ENCODE measurements at regions of chr13 and their contacts with region 1.

Region 1: DNA sequence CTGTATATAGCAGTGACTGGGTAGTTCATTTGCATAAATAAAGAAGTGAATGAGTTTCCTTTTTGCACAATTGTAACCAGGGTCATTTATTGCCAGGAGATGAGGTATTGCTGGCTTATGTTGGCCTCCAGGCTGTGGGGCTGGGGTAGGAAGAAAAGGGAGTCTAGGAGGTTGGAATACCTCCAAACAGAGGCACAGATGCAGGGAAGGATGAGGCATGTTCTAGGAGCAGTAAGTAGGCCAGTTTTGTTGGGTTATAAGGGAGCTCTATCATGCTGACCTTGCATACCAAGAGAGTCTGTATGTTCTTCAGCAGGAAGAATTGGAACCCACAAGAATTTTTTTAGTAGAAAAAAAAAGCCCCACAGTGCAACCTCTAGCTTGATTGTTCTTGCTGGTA is 17.2 kb upstream of the CYSLTR2 start:
- DNase-seq: peak; percentile 64
- H3K4me3 ChIP-seq: no peak overlapping the region
- H3K27ac ChIP-seq: no peak overlapping the region
- H3K4me1 ChIP-seq: peaks cover 3% of the 10 kb centered on the region
- H3K27me3 ChIP-seq: no peaks in the 10 kb centered on the region
- CTCF ChIP-seq: no peak

Region 2: DNA sequence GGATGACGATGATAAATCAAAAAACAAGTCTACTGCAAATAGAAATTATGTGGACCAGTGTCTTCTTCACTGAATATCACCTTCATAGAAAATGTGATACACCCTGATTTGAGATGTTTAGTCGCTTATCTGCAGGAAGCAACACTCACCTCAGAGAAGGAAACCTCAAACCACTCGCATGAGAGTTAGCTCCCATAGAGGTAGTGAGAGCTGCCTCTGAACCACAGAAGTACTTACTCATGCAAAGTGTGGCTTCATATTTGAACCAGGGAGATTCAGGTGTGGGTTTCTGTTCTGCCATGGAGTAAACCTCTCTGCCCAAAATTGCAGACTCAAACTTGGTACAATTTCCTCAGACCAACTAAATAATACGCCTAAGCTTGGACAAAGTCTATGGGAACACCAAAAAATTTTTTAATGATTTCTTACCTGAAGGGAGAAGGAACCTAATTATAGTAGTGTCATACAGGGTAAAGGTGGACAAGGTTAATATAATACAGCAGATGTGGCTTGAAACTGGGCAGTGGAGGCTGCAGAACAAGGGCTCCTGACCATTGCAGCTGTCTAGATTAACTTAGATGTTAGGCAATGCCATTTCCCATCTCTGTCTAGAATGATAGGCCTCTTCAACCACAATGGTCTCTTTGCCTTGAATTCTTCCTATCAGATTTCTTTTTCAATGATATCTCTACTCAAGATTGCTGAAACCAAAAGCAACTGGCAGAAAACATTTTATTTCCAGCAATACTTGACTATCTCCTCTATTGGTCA is 74.1 kb before region 1 on chr13:
- CTCF ChIA-PET with region 1: no interaction called
- dilution Hi-C with region 1: no loop called
- in situ Hi-C with region 1: no loop called
- intact Hi-C with region 1: no loop called
- DNase-seq: peak; percentile 84
- H3K4me3 ChIP-seq: no peak overlapping the region
- H3K27ac ChIP-seq: no peak overlapping the region
- H3K4me1 ChIP-seq: peaks cover 13% of the 10 kb centered on the region
- H3K27me3 ChIP-seq: no peaks in the 10 kb centered on the region
- CTCF ChIP-seq: no peak

Region 3: DNA sequence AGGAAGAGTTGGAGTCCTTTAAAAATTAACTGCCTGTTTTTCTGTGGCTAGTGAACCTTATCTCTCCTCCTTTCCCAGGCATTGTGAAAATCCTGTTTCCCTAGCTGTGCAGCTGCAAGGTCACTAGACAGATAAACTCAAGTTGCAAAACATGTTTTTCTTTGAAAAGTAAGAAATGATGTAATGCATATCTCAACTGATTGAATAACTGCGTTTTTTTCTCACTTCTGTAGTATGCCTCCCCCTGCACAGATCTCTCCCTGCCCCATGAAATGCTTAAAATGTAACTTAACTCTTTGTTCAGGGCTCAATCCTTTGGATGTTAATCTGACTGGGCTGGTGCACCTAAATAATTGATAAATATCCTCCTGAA is 10.5 kb before region 1 on chr13:
- CTCF ChIA-PET with region 1: no interaction called
- dilution Hi-C with region 1: no loop called
- in situ Hi-C with region 1: no loop called
- intact Hi-C with region 1: no loop called
- DNase-seq: no peak
- H3K4me3 ChIP-seq: no peak overlapping the region
- H3K27ac ChIP-seq: no peak overlapping the region
- H3K4me1 ChIP-seq: no peaks in the 10 kb centered on the region
- H3K27me3 ChIP-seq: no peaks in the 10 kb centered on the region
- CTCF ChIP-seq: no peak

Region 4: DNA sequence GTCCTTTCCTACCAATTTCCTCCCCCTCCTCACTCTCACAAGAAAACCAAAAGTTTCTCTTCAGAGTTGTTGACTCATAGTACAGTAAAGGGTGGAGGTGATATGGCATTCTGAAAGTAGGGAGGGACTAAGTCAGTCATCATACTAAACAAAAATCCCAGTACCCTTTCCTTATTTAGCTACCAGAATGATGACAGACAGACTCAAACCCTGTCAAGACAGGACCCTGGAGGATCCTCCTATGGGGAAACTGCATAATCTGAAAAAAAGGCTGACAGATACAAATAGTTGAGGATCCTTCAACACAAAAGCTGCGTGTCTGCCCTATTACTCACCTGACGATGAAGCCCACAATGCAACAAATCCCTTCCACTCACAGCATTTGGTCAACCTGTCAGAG is 72.7 kb after region 1 on chr13:
- CTCF ChIA-PET with region 1: no interaction called
- dilution Hi-C with region 1: loop called (anchors 5 kb)
- in situ Hi-C with region 1: no loop called
- intact Hi-C with region 1: no loop called
- DNase-seq: peak; percentile 79
- H3K4me3 ChIP-seq: no peak overlapping the region
- H3K27ac ChIP-seq: no peak overlapping the region
- H3K4me1 ChIP-seq: no peaks in the 10 kb centered on the region
- H3K27me3 ChIP-seq: no peaks in the 10 kb centered on the region
- CTCF ChIP-seq: no peak

Region 5: GRCh38 chr13:48804821-48805601 is 168.5 kb after region 1 on chr13:
- CTCF ChIA-PET with region 1: no interaction called
- dilution Hi-C with region 1: no loop called
- in situ Hi-C with region 1: no loop called
- intact Hi-C with region 1: no loop called
- DNase-seq: no peak
- H3K4me3 ChIP-seq: no peak overlapping the region
- H3K27ac ChIP-seq: no peak overlapping the region
- H3K4me1 ChIP-seq: no peaks in the 10 kb centered on the region
- H3K27me3 ChIP-seq: no peaks in the 10 kb centered on the region
- CTCF ChIP-seq: no peak